ENCODE measurements at regions of chr10 and their contacts with region 1.

Region 1: DNA sequence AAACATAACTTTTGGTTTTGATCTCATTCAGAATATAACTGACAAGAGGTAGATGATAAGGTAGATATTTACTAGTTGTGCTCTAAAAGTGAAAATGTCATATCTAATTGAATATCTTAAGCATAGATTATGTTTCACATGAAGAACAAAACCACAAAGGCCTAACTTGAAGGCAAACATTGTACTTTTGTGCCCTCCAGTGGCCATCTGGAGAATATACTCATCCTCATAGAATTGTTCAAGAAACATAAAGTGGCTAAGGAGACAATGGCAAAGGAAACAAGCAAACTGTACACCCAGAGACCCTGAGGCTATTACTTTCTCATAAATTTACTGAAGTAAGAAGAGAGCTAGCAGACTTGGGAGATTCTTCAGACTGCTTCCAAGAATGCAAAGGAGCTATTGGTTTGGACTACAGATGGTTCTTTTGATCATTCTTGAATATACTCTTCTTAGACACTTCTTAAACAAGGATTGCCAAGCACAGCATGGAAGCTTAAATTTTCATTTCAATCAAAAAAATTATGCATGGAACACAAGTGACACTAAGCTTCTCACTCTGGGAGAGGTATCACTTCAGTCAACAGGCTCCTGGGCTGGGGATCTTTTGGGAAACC is 98.2 kb upstream of the DKK1 start:
- DNase-seq: no peak

Region 2: GRCh38 chr10:51001587-51001986 is 1214.3 kb before region 1 on chr10:
- intact Hi-C with region 1: loop called in 1 of 2 experiments (anchors 10 kb)
- DNase-seq: no peak

Region 3: GRCh38 chr10:51301644-51302043 is 914.2 kb before region 1 on chr10:
- intact Hi-C with region 1: no loop called
- DNase-seq: no peak

Region 4: DNA sequence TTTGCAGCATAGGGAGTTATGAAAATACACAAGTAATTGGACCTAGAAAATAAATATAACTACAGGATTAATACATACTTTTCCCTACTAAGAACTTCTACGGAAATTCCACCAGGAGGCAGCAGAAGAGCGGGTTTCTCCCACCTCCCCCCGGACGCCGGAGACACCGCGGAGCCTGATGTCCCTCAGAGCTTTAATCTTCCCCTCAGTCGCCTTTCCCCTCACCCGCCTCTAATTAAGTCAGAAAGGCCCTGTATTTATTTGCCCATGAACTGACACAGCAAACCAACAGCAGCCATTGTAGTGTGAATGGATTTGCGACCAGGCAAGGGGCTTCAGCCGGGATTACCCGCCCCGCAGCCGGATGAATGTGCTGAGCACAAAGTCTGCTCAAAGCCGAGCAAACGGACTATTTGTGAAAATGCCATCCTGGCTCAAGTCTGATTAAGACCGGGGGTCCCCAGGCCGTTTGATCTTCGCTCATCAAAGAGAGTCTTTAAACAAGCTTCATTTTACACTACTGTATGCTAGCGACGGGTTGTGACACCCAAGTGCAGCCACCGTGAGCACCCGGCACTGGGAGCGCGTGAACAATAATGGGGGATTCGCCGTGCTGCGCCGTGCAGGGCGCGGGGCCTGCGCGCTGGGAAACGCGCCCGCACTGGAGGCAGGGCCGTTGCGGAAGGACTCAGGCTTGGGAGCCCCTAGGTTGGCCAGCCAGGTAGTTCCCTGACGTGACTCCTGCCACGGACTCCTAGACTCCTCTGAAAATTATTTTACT is 92.6 kb after region 1 on chr10:
- intact Hi-C with region 1: no loop called
- DNase-seq: peak; percentile 83